ENCODE measurements at regions of chr17 and their contacts with region 1.

Region 1: DNA sequence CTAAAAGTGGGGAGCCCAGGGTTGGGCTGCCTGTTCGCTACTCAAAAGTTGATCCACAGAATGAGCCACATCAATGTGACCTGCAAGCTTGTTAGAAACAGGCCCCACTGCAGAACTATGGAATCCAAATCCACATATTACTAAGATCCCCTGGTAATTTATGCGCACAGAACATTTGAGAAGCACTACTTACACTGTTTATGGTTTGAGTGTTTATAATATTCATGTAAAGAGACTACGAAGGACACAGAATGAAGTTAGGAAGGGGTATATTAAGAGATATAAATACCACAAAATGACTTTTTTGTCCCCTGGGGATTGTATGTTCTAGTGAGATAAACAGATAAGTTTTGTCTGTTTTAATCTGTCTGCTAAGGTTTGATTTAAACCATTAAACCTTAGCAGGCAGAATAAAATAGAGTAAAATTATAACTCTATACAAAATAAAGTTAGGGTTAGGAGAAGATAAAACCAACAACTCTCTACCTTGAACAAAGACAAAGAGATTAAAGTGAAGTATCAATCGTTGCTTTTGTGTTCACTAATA is 666.9 kb upstream of the SOX9 start:
- DNase-seq: no peak
- H3K4me3 ChIP-seq: no peak overlapping the region
- H3K27ac ChIP-seq: no peak overlapping the region
- H3K4me1 ChIP-seq: no peaks in the 10 kb centered on the region
- H3K27me3 ChIP-seq: no peaks in the 10 kb centered on the region
- CTCF ChIP-seq: no peak
- POLR2A ChIP-seq: no peak

Region 2: GRCh38 chr17:70420861-70421449 is 1033.0 kb before region 1 on chr17:
- CTCF ChIA-PET with region 1: no interaction called
- POLR2A ChIA-PET with region 1: no interaction called
- dilution Hi-C with region 1: no loop called
- intact Hi-C with region 1: loop called (anchors 5 kb)
- DNase-seq: no peak
- H3K4me3 ChIP-seq: no peak overlapping the region
- H3K27ac ChIP-seq: no peak overlapping the region
- H3K4me1 ChIP-seq: no peaks in the 10 kb centered on the region
- H3K27me3 ChIP-seq: no peaks in the 10 kb centered on the region
- CTCF ChIP-seq: no peak
- POLR2A ChIP-seq: no peak

Region 3: GRCh38 chr17:71667661-71668060 is 213.7 kb after region 1 on chr17:
- CTCF ChIA-PET with region 1: no interaction called
- POLR2A ChIA-PET with region 1: no interaction called
- dilution Hi-C with region 1: no loop called
- intact Hi-C with region 1: no loop called
- DNase-seq: no peak
- H3K4me3 ChIP-seq: no peak overlapping the region
- H3K27ac ChIP-seq: no peak overlapping the region
- H3K4me1 ChIP-seq: no peaks in the 10 kb centered on the region
- H3K27me3 ChIP-seq: no peaks in the 10 kb centered on the region
- CTCF ChIP-seq: no peak
- POLR2A ChIP-seq: no peak

Measured in endothelial cell of umbilical vein (primary cell).